ENCODE measurements at regions of chr10 and their contacts with region 1.

Region 1: GRCh38 chr10:14543046-14543903 is 212.6 kb upstream of the FRMD4A start:
- DNase-seq: peak in 6 of 14 experiments; percentile 36 to 80 (median 64)
- ATAC-seq: peak; percentile 79
- H3K4me3 ChIP-seq: peak overlapping the region; percentile 17
- H3K4me3 Mint-ChIP-seq: peak overlapping the region; percentile 76
- H3K27ac ChIP-seq: peak overlapping the region; percentile 57 to 66
- H3K27ac Mint-ChIP-seq: peak overlapping the region; percentile 98
- H3K4me1 ChIP-seq: peaks cover 64% of the 10 kb centered on the region
- H3K4me1 Mint-ChIP-seq: peaks cover 96% of the 10 kb centered on the region
- H3K27me3 ChIP-seq: no peaks in the 10 kb centered on the region
- H3K27me3 Mint-ChIP-seq: no peaks in the 10 kb centered on the region
- CTCF ChIP-seq: peak; percentile 41

Region 2: DNA sequence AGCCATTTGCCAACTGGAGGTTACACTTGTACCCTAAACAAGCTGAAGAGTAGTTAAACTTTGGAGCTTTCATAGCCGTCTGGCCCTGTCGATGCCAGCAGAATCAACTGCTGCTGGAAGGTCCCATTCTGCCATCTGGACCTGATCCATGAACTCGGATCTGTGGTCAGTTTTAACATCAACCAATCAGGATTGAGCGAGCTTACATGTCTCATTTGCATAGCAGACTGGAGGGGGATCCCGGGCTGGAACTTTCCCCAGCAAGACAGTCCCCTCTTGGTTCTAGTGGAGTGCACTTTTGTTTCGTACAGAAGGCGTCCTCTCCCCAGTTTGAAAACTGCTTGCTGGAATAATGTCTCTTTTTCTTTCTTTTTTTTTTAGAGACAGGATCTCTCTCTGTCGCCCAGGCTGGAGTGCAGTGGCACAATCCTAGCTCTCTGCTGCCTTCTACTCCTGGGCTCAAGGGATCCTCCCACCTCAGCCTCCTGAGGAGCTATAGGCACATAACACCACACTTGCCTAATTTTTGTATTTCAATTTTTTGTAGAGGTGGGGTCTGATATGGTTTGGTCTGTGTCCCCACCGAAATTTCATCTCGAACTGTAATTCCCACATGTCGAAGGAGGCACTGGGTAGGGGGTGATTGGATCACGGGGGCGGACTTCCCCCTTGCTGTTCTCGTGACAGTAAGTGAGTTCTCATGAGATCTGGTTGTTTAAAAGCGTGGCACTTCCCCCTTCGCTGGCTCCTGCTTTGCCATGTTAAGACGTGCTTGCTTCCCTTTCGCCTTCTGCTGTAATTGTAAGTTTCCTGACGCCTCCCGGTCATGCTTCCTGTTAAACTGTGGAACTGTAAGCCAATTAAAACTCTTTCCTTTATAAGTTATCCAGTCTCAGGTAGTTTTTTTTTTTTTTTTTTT is 1152.4 kb before region 1 on chr10:
- CTCF ChIA-PET with region 1: no interaction called
- POLR2A ChIA-PET with region 1: no interaction called
- intact Hi-C with region 1: no loop called
- DNase-seq: peak in 1 of 14 experiments; percentile 13
- ATAC-seq: no peak
- H3K4me3 ChIP-seq: no peak overlapping the region
- H3K4me3 Mint-ChIP-seq: no peak overlapping the region
- H3K27ac ChIP-seq: no peak overlapping the region
- H3K27ac Mint-ChIP-seq: no peak overlapping the region
- H3K4me1 ChIP-seq: no peaks in the 10 kb centered on the region
- H3K4me1 Mint-ChIP-seq: no peaks in the 10 kb centered on the region
- H3K27me3 ChIP-seq: peaks cover 0 to 5% of the 10 kb centered on the region in 2 experiments
- H3K27me3 Mint-ChIP-seq: peaks cover 42% of the 10 kb centered on the region
- CTCF ChIP-seq: no peak

Region 3: DNA sequence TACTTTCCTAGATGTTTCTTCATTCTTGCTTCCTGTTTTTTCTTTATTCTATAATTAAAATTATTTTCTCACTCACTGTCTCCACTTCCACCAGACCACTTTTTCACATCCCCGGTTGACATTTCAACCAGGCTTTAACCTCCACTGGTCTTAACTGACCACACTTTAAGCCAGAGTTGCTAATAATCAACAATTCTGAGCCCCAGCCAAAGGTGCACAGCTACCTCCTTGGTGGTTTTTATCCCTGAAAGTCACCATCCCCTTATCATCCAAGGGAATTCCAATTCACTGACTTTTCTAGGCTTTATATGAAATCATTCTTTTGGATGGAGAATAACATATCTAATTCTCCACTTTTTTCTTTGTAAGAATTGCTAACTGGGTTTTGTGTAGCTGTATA is 351.4 kb before region 1 on chr10:
- CTCF ChIA-PET with region 1: interaction called, 4 read pairs
- POLR2A ChIA-PET with region 1: interaction called, 7 read pairs
- intact Hi-C with region 1: loop called (anchors 2 kb)
- DNase-seq: no peak
- ATAC-seq: no peak
- H3K4me3 ChIP-seq: no peak overlapping the region
- H3K4me3 Mint-ChIP-seq: no peak overlapping the region
- H3K27ac ChIP-seq: no peak overlapping the region
- H3K27ac Mint-ChIP-seq: no peak overlapping the region
- H3K4me1 ChIP-seq: no peaks in the 10 kb centered on the region
- H3K4me1 Mint-ChIP-seq: no peaks in the 10 kb centered on the region
- H3K27me3 ChIP-seq: peaks cover 2 to 9% of the 10 kb centered on the region in 2 experiments
- H3K27me3 Mint-ChIP-seq: peaks cover 19% of the 10 kb centered on the region
- CTCF ChIP-seq: no peak

Region 4: GRCh38 chr10:14528450-14528849 is 14.8 kb before region 1 on chr10:
- CTCF ChIA-PET with region 1: interaction called, 18 read pairs
- POLR2A ChIA-PET with region 1: interaction called, 5 read pairs
- intact Hi-C with region 1: no loop called
- DNase-seq: peak in 3 of 14 experiments; percentile 67 to 74 (median 72)
- ATAC-seq: peak; percentile 77
- H3K4me3 ChIP-seq: no peak overlapping the region
- H3K4me3 Mint-ChIP-seq: peak overlapping the region; percentile 43
- H3K27ac ChIP-seq: peak overlapping the region in 1 of 2 donors; percentile 18
- H3K27ac Mint-ChIP-seq: peak overlapping the region; percentile 45
- H3K4me1 ChIP-seq: peaks cover 69% of the 10 kb centered on the region
- H3K4me1 Mint-ChIP-seq: peaks cover 93% of the 10 kb centered on the region
- H3K27me3 ChIP-seq: no peaks in the 10 kb centered on the region
- H3K27me3 Mint-ChIP-seq: no peaks in the 10 kb centered on the region
- CTCF ChIP-seq: no peak

Region 5: GRCh38 chr10:14564268-14564744 is 21.0 kb after region 1 on chr10:
- CTCF ChIA-PET with region 1: interaction called, 15 read pairs
- POLR2A ChIA-PET with region 1: interaction called, 26 read pairs
- intact Hi-C with region 1: loop called in 1 of 2 experiments (anchors 1 kb)
- DNase-seq: peak in 4 of 14 experiments; percentile 56 to 85 (median 78)
- ATAC-seq: peak; percentile 57
- H3K4me3 ChIP-seq: peak overlapping the region; percentile 32
- H3K4me3 Mint-ChIP-seq: peak overlapping the region; percentile 87
- H3K27ac ChIP-seq: peak overlapping the region; percentile 80 to 82
- H3K27ac Mint-ChIP-seq: peak overlapping the region; percentile 98
- H3K4me1 ChIP-seq: peaks cover 83% of the 10 kb centered on the region
- H3K4me1 Mint-ChIP-seq: peaks cover 97% of the 10 kb centered on the region
- H3K27me3 ChIP-seq: no peaks in the 10 kb centered on the region
- H3K27me3 Mint-ChIP-seq: no peaks in the 10 kb centered on the region
- CTCF ChIP-seq: no peak

Region 6: DNA sequence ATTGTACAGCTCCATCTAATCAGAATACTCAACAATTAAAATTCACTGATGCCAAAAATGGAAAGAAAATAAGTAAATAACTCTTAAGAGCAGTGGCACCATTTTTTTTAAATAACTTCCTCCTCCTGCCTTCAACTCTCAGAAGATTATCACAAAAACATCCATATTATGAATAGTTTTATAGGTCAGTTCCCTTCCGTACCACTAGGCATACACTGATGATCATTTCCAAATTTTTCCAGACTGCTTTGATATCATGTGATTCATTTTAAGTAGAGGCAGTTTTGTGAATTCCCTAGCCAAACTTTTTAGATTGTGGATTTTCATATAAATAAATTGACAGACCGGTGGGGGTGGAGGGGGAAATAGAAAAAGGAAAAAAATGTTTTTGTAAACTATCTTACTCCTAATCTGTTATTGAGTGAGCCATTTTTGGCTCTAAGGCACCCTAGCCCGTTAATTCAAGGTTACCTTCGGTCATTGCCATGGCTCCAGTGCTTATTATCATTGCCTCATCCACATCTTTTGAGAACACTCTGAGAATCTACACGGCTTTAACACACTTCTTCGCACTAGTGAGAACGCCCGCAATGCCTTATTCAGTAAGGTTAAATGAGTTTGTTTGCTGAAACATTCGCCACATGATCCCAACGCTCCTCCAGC is 230.4 kb after region 1 on chr10:
- CTCF ChIA-PET with region 1: no interaction called
- POLR2A ChIA-PET with region 1: no interaction called
- intact Hi-C with region 1: no loop called
- DNase-seq: no peak
- ATAC-seq: no peak
- H3K4me3 ChIP-seq: no peak overlapping the region
- H3K4me3 Mint-ChIP-seq: no peak overlapping the region
- H3K27ac ChIP-seq: no peak overlapping the region
- H3K27ac Mint-ChIP-seq: no peak overlapping the region
- H3K4me1 ChIP-seq: no peaks in the 10 kb centered on the region
- H3K4me1 Mint-ChIP-seq: no peaks in the 10 kb centered on the region
- H3K27me3 ChIP-seq: no peaks in the 10 kb centered on the region
- H3K27me3 Mint-ChIP-seq: no peaks in the 10 kb centered on the region
- CTCF ChIP-seq: no peak

Region 7: GRCh38 chr10:14822879-14823755 is 279.8 kb after region 1 on chr10:
- CTCF ChIA-PET with region 1: interaction called, 3 read pairs
- POLR2A ChIA-PET with region 1: interaction called, 7 read pairs
- intact Hi-C with region 1: loop called (anchors 5 kb)
- DNase-seq: peak in 13 of 14 experiments; percentile 15 to 67 (median 37)
- ATAC-seq: peak; percentile 56
- H3K4me3 ChIP-seq: no peak overlapping the region
- H3K4me3 Mint-ChIP-seq: no peak overlapping the region
- H3K27ac ChIP-seq: no peak overlapping the region
- H3K27ac Mint-ChIP-seq: no peak overlapping the region
- H3K4me1 ChIP-seq: no peaks in the 10 kb centered on the region
- H3K4me1 Mint-ChIP-seq: peaks cover 4% of the 10 kb centered on the region
- H3K27me3 ChIP-seq: no peaks in the 10 kb centered on the region
- H3K27me3 Mint-ChIP-seq: no peaks in the 10 kb centered on the region
- CTCF ChIP-seq: peak; percentile 76